Endothelial cell of umbilical vein (primary cell): ENCODE measurements at regions of chr19 and their contacts with region 1.

Region 1: DNA sequence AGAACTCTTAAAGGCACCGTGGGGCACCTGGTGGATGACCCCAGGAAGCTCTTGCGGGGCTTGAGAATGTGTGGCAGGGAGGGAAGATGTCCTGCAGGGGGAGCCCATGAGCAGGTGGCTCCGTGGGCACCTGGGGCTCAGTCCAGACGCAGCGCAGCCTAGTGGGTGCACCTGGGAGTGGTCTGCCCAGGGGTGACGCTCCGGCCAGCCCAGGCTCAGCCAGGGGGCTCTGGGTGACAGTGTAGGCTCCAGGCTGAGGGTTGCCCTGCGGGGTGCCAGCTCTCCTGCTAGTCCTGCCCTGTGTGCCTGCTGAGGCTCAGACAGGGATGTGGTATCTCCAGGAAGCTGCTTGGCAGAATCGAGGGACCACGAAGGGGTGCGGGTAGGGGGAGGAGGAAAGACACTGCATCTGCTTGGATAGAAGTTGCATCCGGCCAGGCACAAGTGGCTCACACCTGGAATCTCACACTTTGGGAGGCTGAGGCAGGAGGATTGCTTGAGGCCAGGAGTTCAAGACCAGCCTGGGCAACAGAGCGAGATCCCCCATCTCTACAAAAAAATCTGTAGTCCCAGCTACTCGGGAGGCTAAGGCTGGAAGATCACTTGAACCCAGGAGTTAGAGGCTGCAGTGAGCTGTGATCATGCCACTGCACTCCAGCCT is 15.0 kb upstream of the PGLS start:
- DNase-seq: peak; percentile 81
- H3K4me3 ChIP-seq: no peak overlapping the region
- H3K27ac ChIP-seq: no peak overlapping the region
- H3K4me1 ChIP-seq: peaks cover 12% of the 10 kb centered on the region
- H3K27me3 ChIP-seq: no peaks in the 10 kb centered on the region
- CTCF ChIP-seq: peak; percentile 99
- POLR2A ChIP-seq: no peak

Region 2: GRCh38 chr19:17511724-17512573 is 15.5 kb after region 1 on chr19:
- CTCF ChIA-PET with region 1: interaction called, 67 read pairs
- POLR2A ChIA-PET with region 1: interaction called, 3 read pairs
- dilution Hi-C with region 1: no loop called
- intact Hi-C with region 1: no loop called
- DNase-seq: peak; percentile 84
- H3K4me3 ChIP-seq: peak overlapping the region; percentile 81 to 82 (median 81)
- H3K27ac ChIP-seq: peak overlapping the region; percentile 69
- H3K4me1 ChIP-seq: peaks cover 13% of the 10 kb centered on the region
- H3K27me3 ChIP-seq: no peaks in the 10 kb centered on the region
- CTCF ChIP-seq: peak in 1 of 2 donors; percentile 14
- POLR2A ChIP-seq: no peak

Region 3: DNA sequence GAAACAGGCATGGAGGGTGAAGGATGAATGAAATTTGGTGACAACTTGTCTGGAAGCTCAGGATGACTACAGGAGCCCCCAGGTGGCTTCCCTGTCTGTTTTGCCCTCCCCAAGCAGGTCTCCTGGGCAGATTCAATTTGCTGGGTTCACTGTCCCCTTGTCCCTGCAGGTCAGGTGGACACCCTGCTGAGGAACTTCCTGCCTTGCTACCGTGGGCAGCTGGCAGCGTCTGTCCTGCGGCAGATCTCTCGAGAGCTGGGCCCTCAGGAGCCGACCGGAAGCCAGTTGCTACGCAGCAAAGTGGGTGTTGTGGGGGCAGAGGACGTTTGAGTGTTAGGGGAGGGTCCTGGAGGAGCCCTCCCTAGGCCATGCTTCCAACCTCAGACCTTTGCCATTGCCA is 34.1 kb after region 1 on chr19:
- CTCF ChIA-PET with region 1: interaction called, 11 read pairs
- POLR2A ChIA-PET with region 1: no interaction called
- dilution Hi-C with region 1: no loop called
- intact Hi-C with region 1: no loop called
- DNase-seq: no peak
- H3K4me3 ChIP-seq: no peak overlapping the region
- H3K27ac ChIP-seq: no peak overlapping the region
- H3K4me1 ChIP-seq: no peaks in the 10 kb centered on the region
- H3K27me3 ChIP-seq: peaks cover 2% of the 10 kb centered on the region in 2 experiments
- CTCF ChIP-seq: no peak
- POLR2A ChIP-seq: no peak

Region 4: DNA sequence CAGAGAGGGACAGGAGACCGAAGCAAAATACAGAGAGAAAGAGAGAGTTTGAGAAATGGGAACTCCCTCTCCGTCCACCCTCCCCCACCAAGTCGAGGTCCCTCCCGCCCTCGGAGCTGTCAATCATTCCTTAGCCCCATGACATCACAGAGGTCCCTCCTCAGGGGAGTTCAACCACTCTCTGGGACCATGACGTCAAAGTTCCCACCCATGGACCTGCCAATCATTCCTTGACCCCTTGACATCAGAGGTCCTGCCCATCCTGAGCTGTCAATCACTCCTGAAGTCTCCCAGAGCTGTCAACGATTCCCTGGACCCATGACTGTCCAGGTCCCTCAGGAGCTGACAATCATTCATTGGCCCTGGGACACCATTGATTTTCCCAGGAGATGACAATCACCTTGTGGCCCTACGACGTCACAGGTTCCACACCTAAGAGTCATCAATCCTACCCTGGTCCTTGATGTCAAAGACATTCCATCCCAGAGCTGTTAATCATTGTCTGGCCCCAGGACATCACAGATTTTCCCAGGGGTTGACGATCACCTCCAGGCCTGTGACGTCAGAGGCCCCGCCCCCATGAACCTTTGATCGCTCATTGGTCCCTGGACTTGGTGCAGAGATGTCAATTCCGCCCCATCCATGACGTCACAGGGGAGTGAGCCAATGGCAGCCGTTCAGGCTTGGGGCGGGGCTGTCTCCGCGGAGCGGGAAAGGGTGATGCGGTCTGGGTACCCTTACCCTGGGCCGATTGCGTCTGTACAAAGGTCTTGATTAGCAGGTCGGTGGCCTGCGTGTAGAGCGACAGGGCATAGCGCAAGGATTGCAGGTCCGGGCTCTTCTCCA is 120.7 kb after region 1 on chr19:
- CTCF ChIA-PET with region 1: interaction called, 10 read pairs
- POLR2A ChIA-PET with region 1: no interaction called
- dilution Hi-C with region 1: no loop called
- intact Hi-C with region 1: no loop called
- DNase-seq: no peak
- H3K4me3 ChIP-seq: no peak overlapping the region
- H3K27ac ChIP-seq: no peak overlapping the region
- H3K4me1 ChIP-seq: no peaks in the 10 kb centered on the region
- H3K27me3 ChIP-seq: peaks cover 2 to 3% of the 10 kb centered on the region in 2 experiments
- CTCF ChIP-seq: no peak
- POLR2A ChIP-seq: no peak